Activated CD4-positive, alpha-beta T cell treated with anti-CD3 and anti-CD28 coated beads, Interleukin-2, amount 10 ng/mL, durations not matched to agents 24 days and 14 days (primary cell): ENCODE measurements at regions of chr13 and their contacts with region 1.

Region 1: DNA sequence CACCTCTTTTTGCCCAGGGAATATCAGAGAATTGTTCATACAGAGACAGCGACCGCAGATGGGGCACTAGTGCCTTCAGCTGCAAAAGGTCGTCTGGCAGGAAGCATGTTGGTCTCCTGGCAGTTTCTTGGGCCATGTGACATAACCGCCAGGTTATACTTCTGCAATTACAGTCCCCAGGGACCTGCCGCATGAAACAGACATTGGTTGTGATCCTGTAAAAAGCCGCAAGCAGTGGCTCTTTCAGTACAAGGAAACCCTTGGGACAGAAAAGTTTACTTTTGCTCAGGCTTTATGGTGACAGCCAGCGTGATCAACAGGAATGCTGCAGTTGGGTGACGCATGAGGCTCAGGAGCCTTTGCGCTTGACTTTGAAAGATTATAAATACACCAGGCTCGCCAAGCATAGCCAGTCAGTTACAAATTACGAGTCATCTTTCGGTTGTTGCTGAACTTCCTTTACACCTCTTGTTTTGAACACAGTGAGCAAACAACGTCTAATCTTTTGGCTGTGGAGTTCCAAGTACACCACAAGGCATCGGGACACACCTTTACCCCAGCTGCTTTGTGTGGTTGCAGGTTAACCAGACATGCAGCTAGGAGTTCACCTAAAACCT is 50.5 kb upstream of the UBE2L5 start:
- DNase-seq: peak; percentile 91
- H3K4me3 Mint-ChIP-seq: peak overlapping the region; percentile 85
- H3K27ac Mint-ChIP-seq: peak overlapping the region; percentile 91
- H3K4me1 Mint-ChIP-seq: peaks cover 75% of the 10 kb centered on the region
- H3K27me3 Mint-ChIP-seq: no peaks in the 10 kb centered on the region

Region 2: DNA sequence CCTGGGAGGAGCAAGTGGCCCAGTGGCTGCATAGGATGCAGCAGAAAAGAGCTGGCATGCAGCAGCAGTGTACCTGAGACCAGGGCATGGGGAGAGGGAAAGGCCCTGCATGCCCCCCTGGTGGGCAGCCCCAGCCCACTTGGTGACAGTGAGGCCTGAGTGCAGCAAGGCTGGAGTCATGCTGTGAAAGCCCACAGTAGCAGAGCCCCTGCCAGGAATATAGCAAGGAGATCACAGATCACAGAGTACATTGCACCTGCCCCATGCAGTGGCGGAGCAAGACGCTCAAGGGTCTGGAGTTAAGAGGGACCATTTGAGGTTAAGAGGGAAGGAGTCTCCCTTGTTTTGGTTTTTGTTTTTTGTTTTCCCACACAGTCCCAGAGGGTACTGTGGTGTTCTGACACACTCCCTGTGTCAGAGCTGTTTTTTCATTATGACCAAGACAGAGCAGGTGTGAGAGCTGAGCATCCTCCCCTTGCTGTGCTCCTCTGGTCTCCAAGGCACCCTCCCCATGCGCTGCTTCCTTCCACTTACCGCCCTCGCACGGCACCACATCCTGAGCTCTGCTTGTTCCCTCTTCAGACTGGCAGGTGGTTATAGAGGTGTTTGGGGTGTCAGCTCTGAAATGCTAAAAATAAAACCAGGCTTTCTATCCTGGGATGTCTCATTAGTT is 436.3 kb before region 1 on chr13:
- intact Hi-C with region 1: loop called (anchors 5 kb)
- DNase-seq: peak; percentile 94
- H3K4me3 Mint-ChIP-seq: peak overlapping the region; percentile 87
- H3K27ac Mint-ChIP-seq: peak overlapping the region; percentile 94
- H3K4me1 Mint-ChIP-seq: peaks cover 47% of the 10 kb centered on the region
- H3K27me3 Mint-ChIP-seq: no peaks in the 10 kb centered on the region

Region 3: GRCh38 chr13:30142486-30143211 is 229.1 kb before region 1 on chr13:
- intact Hi-C with region 1: loop called (anchors 1 kb)
- DNase-seq: peak; percentile 78
- H3K4me3 Mint-ChIP-seq: peak overlapping the region; percentile 37
- H3K27ac Mint-ChIP-seq: peak overlapping the region; percentile 93
- H3K4me1 Mint-ChIP-seq: peaks cover 54% of the 10 kb centered on the region
- H3K27me3 Mint-ChIP-seq: peaks cover 2% of the 10 kb centered on the region

Region 4: DNA sequence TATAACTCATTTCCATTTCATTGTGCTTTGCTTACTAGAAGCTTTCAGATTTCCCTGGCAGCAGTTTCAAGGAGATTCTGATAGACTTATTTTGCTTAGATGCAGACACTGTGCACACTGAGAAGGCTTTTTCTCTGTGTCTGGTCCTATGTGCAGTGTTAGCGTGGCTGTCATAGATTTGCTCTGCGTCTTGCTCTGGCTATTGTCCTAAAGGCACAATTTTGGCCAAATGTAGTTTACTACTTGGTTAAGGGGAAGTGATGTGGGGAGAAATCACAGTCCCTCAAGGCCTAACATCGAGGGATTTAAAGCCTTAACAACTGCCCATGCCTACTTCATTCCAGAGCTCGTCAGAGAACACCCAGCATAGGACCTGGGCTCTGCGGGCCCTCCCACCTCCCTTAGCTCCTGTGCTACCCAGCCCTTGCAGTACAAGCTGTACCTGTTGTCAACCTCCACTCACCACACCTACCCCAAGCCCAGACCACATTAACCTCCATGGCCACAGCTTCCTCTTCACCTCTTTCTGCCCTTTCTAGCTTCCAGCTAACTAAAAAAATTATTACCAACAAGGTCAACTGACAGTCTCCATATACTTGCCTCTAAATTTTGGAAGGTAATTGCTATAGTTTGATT is 25.5 kb before region 1 on chr13:
- intact Hi-C with region 1: loop called (anchors 2 kb)
- DNase-seq: peak; percentile 93
- H3K4me3 Mint-ChIP-seq: peak overlapping the region; percentile 50
- H3K27ac Mint-ChIP-seq: peak overlapping the region; percentile 38
- H3K4me1 Mint-ChIP-seq: peaks cover 33% of the 10 kb centered on the region
- H3K27me3 Mint-ChIP-seq: no peaks in the 10 kb centered on the region

Region 5: GRCh38 chr13:30395192-30396084 is 23.7 kb after region 1 on chr13:
- intact Hi-C with region 1: loop called (anchors 1 kb)
- DNase-seq: peak; percentile 89
- H3K4me3 Mint-ChIP-seq: peak overlapping the region; percentile 81
- H3K27ac Mint-ChIP-seq: peak overlapping the region; percentile 96
- H3K4me1 Mint-ChIP-seq: peaks cover 35% of the 10 kb centered on the region
- H3K27me3 Mint-ChIP-seq: no peaks in the 10 kb centered on the region

Region 6: DNA sequence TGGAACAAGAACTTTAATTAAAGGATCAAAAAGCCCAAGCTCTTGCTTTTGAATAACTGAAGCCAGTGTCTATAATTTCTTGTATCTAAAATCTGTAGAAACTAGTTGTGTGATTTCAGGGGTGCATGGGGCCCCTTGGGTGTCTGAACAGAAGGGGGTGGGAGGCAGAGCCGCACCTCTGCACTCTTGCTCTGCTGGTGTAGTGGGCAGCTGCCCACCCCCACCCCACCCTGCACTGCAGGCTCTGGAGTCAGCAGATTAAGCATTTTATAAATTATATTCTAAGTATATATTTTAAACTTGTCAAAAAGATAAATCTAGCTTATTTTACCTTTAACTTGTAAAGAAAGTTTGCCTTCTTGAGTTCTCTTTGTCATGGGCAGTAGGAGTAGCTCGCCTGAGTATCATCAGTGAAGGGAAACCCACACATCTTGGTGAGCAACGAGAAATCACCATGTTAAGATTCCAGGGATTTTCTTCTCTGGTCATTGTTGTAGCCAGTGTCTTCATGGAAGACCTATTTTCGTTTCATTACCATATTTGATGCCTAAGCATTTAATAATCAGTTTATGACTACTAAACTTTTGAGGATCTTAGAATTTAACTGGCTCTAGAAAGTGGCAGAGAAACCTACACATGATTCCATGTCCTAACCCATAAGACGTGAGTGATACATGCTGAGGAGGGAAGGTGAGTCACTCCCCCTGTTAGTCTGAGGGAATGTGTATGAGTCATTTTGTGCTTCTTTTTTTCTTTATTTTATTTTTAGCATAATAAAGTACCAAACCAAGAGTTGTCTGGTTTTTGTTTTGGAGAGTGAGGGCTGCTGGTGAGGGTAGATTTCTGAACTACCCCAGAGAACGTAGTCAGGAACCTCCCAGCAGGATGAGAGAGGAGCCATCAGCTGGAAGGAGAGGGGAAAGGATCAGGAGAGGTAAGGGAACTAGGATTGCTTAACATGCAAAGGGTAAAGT is 58.3 kb after region 1 on chr13:
- intact Hi-C with region 1: loop called (anchors 2 kb)
- DNase-seq: no peak
- H3K4me3 Mint-ChIP-seq: peak overlapping the region; percentile 63
- H3K27ac Mint-ChIP-seq: peak overlapping the region; percentile 91
- H3K4me1 Mint-ChIP-seq: peaks cover 28% of the 10 kb centered on the region
- H3K27me3 Mint-ChIP-seq: no peaks in the 10 kb centered on the region

Region 7: GRCh38 chr13:30572859-30573275 is 201.1 kb after region 1 on chr13:
- intact Hi-C with region 1: no loop called
- DNase-seq: peak; percentile 72
- H3K4me3 Mint-ChIP-seq: peak overlapping the region; percentile 57
- H3K27ac Mint-ChIP-seq: peak overlapping the region; percentile 52
- H3K4me1 Mint-ChIP-seq: peaks cover 34% of the 10 kb centered on the region
- H3K27me3 Mint-ChIP-seq: peaks cover 2% of the 10 kb centered on the region